ENCODE measurements at regions of chr15 and their contacts with region 1.

Region 1: GRCh38 chr15:26260517-26261133 is 397.5 kb upstream of the ATP10A start:
- DNase-seq: peak; percentile 54
- ATAC-seq: peak; percentile 51
- H3K4me3 Mint-ChIP-seq: no peak overlapping the region
- H3K27ac Mint-ChIP-seq: no peak overlapping the region
- H3K4me1 Mint-ChIP-seq: no peaks in the 10 kb centered on the region
- H3K27me3 Mint-ChIP-seq: peaks cover 2% of the 10 kb centered on the region

Region 2: DNA sequence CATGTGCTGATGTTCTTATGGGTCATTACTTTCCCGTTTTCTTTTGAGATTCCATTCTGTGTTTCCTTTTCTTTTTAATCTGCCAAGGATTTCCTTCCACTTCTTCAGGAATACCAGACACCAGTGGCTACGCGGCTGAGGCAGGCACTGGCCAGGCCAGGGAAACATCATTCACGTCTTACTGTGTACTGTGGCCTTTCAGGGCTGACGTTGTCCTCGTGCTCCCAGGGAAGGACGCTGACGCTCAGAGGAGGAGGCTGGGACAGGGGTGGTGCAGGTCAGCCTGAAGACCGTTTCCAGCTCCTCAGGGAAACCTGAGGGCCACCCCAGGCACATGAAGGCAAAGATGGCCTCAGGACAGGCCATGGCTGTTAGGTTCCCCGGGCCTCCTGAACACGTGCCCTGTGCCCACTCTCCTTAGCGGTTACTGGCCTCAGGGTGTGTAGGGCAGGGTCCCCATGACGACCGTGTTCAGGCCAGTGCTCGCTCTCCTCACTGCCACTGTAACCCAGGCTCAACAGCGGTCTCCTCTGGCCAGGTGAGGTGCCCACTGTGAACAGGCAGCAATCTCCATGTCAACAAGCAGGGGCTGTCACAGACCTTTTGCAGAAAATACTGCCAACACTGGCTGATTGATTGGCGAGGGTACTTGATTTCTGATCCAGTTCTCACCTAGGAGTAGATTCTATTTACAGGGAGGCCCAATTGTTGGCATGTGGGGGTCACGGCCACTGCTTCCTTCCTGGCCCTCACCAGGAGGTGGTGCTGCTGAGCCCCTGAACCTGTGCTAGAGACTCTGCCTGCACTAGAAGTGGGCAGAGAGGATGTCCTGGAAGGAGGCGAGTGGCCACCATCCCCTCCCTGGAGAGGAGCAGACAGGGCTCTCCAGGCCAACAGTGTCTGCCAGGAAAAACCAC is 567.0 kb before region 1 on chr15:
- CTCF ChIA-PET with region 1: no interaction called
- POLR2A ChIA-PET with region 1: no interaction called
- intact Hi-C with region 1: loop called in 1 of 2 experiments (anchors 10 kb)
- DNase-seq: peak; percentile 64
- ATAC-seq: peak; percentile 63
- H3K4me3 Mint-ChIP-seq: no peak overlapping the region
- H3K27ac Mint-ChIP-seq: no peak overlapping the region
- H3K4me1 Mint-ChIP-seq: no peaks in the 10 kb centered on the region
- H3K27me3 Mint-ChIP-seq: no peaks in the 10 kb centered on the region

Region 3: GRCh38 chr15:25947323-25948314 is 313.0 kb before region 1 on chr15:
- CTCF ChIA-PET with region 1: interaction called, 3 read pairs
- POLR2A ChIA-PET with region 1: no interaction called
- intact Hi-C with region 1: loop called in 1 of 2 experiments (anchors 10 kb)
- DNase-seq: peak; percentile 19
- ATAC-seq: no peak
- H3K4me3 Mint-ChIP-seq: no peak overlapping the region
- H3K27ac Mint-ChIP-seq: no peak overlapping the region
- H3K4me1 Mint-ChIP-seq: no peaks in the 10 kb centered on the region
- H3K27me3 Mint-ChIP-seq: no peaks in the 10 kb centered on the region

Region 4: GRCh38 chr15:26082221-26083109 is 178.2 kb before region 1 on chr15:
- CTCF ChIA-PET with region 1: no interaction called
- POLR2A ChIA-PET with region 1: no interaction called
- intact Hi-C with region 1: no loop called
- DNase-seq: peak; percentile 97
- ATAC-seq: peak; percentile 99
- H3K4me3 Mint-ChIP-seq: peak overlapping the region; percentile 84
- H3K27ac Mint-ChIP-seq: peak overlapping the region; percentile 95
- H3K4me1 Mint-ChIP-seq: peaks cover 32% of the 10 kb centered on the region
- H3K27me3 Mint-ChIP-seq: no peaks in the 10 kb centered on the region